CD8-positive, alpha-beta T cell (primary cell): ENCODE measurements at regions of chr16 and their contacts with region 1.

Region 1: GRCh38 chr16:29815793-29816693 is at the start of gene PAGR1:
- DNase-seq: peak; percentile 97 to 100 (median 98)
- ATAC-seq: peak; percentile 77
- H3K4me3 ChIP-seq: peak within 1 kb of the TSS; percentile 74 to 90
- H3K4me3 Mint-ChIP-seq: peak within 1 kb of the TSS; percentile 98
- H3K27ac ChIP-seq: peak within 1 kb of the TSS; percentile 80 to 86
- H3K27ac Mint-ChIP-seq: peak within 1 kb of the TSS; percentile 98
- H3K4me1 ChIP-seq: peaks cover 59% of the 10 kb centered on the region
- H3K4me1 Mint-ChIP-seq: peaks cover 62% of the 10 kb centered on the region
- H3K27me3 ChIP-seq: no peaks in the 10 kb centered on the region
- H3K27me3 Mint-ChIP-seq: no peaks in the 10 kb centered on the region
- CTCF ChIP-seq: peak; percentile 92
- total RNA-seq, gene PAGR1: 13.8 to 16.8 TPM

Region 2: DNA sequence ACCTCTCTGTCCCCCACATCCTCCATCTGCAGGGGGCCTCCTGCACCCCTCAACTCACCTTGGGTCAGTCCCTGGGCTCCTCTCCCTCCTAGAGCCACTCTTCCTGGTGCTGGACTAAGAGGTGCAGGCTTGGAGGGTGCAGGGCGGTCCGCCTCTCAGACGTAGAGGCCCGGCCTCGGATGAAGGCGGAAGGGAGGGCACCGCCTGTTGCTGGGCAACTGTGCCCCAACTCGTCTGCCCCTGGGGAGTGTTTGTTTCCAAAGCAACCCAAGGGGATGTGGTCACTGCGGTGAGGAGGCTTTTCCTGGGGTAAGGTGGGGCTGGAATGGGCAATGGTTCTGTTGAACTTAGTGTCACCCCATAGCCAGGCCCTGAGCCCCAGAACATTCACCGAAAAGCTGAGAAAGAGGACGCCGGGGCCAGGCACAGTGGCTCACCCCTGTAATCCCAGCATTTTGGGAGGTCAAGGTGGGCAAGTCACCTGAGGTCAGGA is 70.1 kb before region 1 on chr16 and contains the start of gene C16orf54:
- CTCF ChIA-PET with region 1: interaction called, 4 read pairs
- POLR2A ChIA-PET with region 1: interaction called, 5 read pairs
- intact Hi-C with region 1: loop called in 1 of 2 experiments (anchors 1 kb)
- DNase-seq: peak; percentile 88 to 98 (median 95)
- ATAC-seq: peak; percentile 81
- H3K4me3 ChIP-seq: peak within 1 kb of the TSS; percentile 90 to 93
- H3K4me3 Mint-ChIP-seq: peak within 1 kb of the TSS; percentile 94
- H3K27ac ChIP-seq: peak within 1 kb of the TSS; percentile 96 to 98
- H3K27ac Mint-ChIP-seq: peak within 1 kb of the TSS; percentile 96
- H3K4me1 ChIP-seq: peaks cover 62% of the 10 kb centered on the region
- H3K4me1 Mint-ChIP-seq: peaks cover 69% of the 10 kb centered on the region
- H3K27me3 ChIP-seq: no peaks in the 10 kb centered on the region
- H3K27me3 Mint-ChIP-seq: no peaks in the 10 kb centered on the region
- CTCF ChIP-seq: no peak
- total RNA-seq, gene C16orf54: 129 to 132 TPM

Region 3: DNA sequence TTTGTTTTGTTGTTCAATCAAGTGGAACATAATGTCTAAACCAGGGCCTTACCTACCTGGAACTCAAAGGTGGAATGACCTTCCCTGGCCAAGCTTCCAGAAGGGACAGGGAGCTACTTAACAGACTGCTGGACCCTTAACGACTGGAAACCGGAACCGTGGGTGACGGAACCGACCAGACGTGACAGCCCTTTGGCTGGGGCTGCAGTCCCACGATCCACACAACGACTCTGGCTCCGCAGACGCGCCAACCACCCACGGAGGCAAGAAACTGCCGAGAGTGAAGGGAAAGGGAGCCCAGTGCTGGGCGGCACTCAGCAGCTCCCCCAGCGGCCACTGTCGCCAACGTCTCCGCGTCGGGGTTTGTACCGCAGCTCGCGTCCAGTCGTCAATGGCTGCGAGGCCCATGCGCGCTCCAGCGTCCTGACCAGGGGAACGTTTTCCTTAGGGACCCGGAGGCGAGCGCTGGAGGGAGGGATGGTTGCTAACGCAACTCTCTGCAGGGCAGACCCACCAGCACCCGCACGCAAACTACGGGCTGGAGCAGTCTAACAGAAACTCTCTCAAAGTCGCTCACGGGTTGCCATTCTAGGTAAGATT is 31.0 kb before region 1 on chr16:
- CTCF ChIA-PET with region 1: interaction called, 15 read pairs
- POLR2A ChIA-PET with region 1: interaction called, 22 read pairs
- intact Hi-C with region 1: loop called (anchors 1 kb)
- DNase-seq: peak; percentile 61 to 87 (median 78)
- ATAC-seq: peak; percentile 89
- H3K4me3 ChIP-seq: peak overlapping the region; percentile 21 to 34
- H3K4me3 Mint-ChIP-seq: peak overlapping the region; percentile 75
- H3K27ac ChIP-seq: peak overlapping the region in 1 of 2 experiments; percentile 4
- H3K27ac Mint-ChIP-seq: peak overlapping the region; percentile 69
- H3K4me1 ChIP-seq: peaks cover 22% of the 10 kb centered on the region
- H3K4me1 Mint-ChIP-seq: peaks cover 24% of the 10 kb centered on the region
- H3K27me3 ChIP-seq: no peaks in the 10 kb centered on the region
- H3K27me3 Mint-ChIP-seq: no peaks in the 10 kb centered on the region
- CTCF ChIP-seq: peak; percentile 76

Region 4: DNA sequence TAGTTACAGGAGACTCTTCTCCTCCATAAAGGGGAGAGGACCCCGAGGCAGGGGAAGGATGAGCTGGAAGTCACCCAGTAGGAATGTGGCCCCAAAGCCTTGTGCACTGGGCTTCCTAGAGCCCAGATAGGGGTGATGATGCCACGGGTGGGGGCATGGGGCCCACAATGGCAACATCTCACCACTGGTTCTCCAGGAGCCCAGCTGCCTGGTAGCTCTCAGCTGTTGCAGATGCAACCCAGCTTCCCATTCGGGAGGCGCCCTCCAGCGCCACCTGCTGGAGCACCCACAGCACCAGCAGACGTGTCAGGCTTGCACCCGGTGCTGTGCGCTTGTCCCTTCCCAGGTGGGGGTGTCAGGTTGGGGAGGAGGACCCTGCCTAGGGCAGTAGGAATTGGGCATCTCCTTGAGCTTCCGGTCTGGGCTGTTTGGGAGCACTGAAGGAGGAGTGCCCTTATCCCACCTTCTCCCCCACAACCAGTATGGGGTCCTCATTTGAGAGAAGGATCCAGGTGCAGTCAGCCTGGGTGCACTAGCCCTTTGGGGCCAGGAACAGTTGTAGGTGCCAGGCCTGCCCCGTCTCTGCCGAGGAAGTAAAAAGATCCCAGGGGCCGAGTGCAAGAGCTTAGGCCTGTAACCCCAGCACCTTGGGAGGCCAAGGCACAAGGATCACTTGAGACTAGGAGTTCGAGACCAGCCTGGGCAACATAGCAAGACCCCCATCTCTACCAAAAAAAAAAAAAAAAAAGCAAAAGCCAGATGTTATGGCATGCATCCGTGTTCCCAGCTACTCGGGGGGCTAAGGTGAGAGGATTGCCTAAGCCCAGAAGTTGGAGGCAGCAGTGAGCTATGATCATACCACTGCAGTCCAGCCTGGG is 32.6 kb after region 1 on chr16:
- CTCF ChIA-PET with region 1: interaction called, 90 read pairs
- POLR2A ChIA-PET with region 1: interaction called, 32 read pairs
- intact Hi-C with region 1: loop called (anchors 1 to 2 kb)
- DNase-seq: peak; percentile 62 to 92 (median 84)
- ATAC-seq: peak; percentile 98
- H3K4me3 ChIP-seq: no peak overlapping the region
- H3K4me3 Mint-ChIP-seq: no peak overlapping the region
- H3K27ac ChIP-seq: no peak overlapping the region
- H3K27ac Mint-ChIP-seq: no peak overlapping the region
- H3K4me1 ChIP-seq: no peaks in the 10 kb centered on the region
- H3K4me1 Mint-ChIP-seq: peaks cover 3% of the 10 kb centered on the region
- H3K27me3 ChIP-seq: no peaks in the 10 kb centered on the region
- H3K27me3 Mint-ChIP-seq: no peaks in the 10 kb centered on the region
- CTCF ChIP-seq: peak; percentile 78

Region 5: GRCh38 chr16:30000735-30001631 is 184.9 kb after region 1 on chr16:
- CTCF ChIA-PET with region 1: no interaction called
- POLR2A ChIA-PET with region 1: no interaction called
- intact Hi-C with region 1: no loop called
- DNase-seq: no peak
- ATAC-seq: no peak
- H3K4me3 ChIP-seq: no peak overlapping the region
- H3K4me3 Mint-ChIP-seq: no peak overlapping the region
- H3K27ac ChIP-seq: no peak overlapping the region
- H3K27ac Mint-ChIP-seq: no peak overlapping the region
- H3K4me1 ChIP-seq: peaks cover 7% of the 10 kb centered on the region
- H3K4me1 Mint-ChIP-seq: peaks cover 22% of the 10 kb centered on the region
- H3K27me3 ChIP-seq: no peaks in the 10 kb centered on the region
- H3K27me3 Mint-ChIP-seq: no peaks in the 10 kb centered on the region
- CTCF ChIP-seq: no peak